GM13976 (cell line): ENCODE measurements at regions of chr16 and their contacts with region 1.

Region 1: GRCh38 chr16:54957403-54958171 is 26.9 kb downstream of the IRX5 start:
- DNase-seq: peak; percentile 51
- CTCF ChIP-seq: peak; percentile 30

Region 2: GRCh38 chr16:53341792-53342191 is 1615.8 kb before region 1 on chr16:
- in situ Hi-C with region 1: no loop called
- DNase-seq: no peak
- CTCF ChIP-seq: no peak

Region 3: GRCh38 chr16:53549970-53550690 is 1407.5 kb before region 1 on chr16:
- in situ Hi-C with region 1: loop called (anchors 25 kb)
- DNase-seq: peak; percentile 81
- CTCF ChIP-seq: peak; percentile 66